Spleen (tissue), 13 donors: ENCODE measurements at regions of chr4 and their contacts with region 1.

Region 1: GRCh38 chr4:107915220-107915619 is 16.1 kb upstream of the CYP2U1 start:
- DNase-seq: no peak
- H3K4me3 ChIP-seq: no peak overlapping the region
- H3K27ac ChIP-seq: no peak overlapping the region
- H3K4me1 ChIP-seq: peaks cover 0 to 9% (median 2%) of the 10 kb centered on the region in 6 donors
- H3K27me3 ChIP-seq: no peaks in the 10 kb centered on the region
- CTCF ChIP-seq: no peak
- POLR2A ChIP-seq: no peak

Region 2: GRCh38 chr4:107757864-107758476 is 157.2 kb before region 1 on chr4:
- intact Hi-C with region 1: loop called (anchors 5 kb)
- DNase-seq: no peak
- H3K4me3 ChIP-seq: no peak overlapping the region
- H3K27ac ChIP-seq: no peak overlapping the region
- H3K4me1 ChIP-seq: peaks cover 0 to 18% (median 6%) of the 10 kb centered on the region in 6 donors
- H3K27me3 ChIP-seq: no peaks in the 10 kb centered on the region
- CTCF ChIP-seq: peak in 8 of 11 experiments; percentile 33 to 62 (median 54)
- POLR2A ChIP-seq: no peak